ENCODE measurements at regions of chr2 and their contacts with region 1.

Region 1: DNA sequence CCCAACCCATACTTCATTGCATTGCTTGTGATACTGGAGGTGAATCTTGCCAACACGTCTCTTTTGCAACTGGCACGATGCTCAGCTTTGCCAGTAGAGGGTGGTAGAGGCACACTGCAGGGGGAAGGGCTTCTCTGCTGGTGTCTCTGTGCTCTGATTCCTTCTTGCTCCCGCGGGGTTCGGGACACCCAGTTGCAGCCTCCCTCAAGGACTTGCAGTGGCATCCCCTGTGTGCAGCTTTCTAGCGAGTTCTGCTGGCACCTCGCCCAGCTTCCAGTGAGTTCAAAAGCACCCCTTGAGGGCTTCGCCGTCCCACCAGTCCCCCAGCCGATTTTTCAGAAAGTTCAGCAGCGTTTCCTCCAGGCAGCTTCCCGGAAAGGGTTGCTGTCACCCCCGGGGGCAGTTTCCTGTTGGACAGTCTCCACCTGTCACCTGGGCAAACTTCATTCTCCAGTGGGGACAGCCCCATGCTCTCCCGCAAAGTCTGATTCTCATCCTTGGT is 35.3 kb upstream of the EN1 start:
- H3K4me3 ChIP-seq: peak overlapping the region; percentile 30
- H3K27ac ChIP-seq: no peak overlapping the region
- H3K4me1 ChIP-seq: no peaks in the 10 kb centered on the region
- CTCF ChIP-seq: peak; percentile 76

Region 2: DNA sequence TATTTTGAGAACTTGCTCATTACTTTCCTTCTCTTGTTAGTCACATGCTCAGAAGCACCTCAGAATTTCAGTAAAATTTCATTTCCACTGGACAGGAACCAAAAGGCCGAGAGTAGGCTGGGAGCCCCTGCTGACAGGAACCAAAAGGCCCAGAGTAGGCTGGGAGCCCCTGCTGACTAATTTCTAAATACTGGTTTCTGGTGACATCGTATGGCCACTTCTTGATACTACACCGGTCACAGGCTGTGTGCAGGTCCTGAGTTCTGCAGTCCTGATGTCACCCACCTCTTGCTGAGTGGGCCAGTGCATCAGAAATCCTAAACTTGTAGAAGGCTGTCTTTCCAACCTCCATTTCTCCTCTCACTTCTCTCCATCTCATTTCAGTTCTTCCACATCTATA is 17.7 kb before region 1 on chr2:
- CTCF ChIA-PET with region 1: interaction called, 38 read pairs
- POLR2A ChIA-PET with region 1: no interaction called
- H3K4me3 ChIP-seq: no peak overlapping the region
- H3K27ac ChIP-seq: no peak overlapping the region
- H3K4me1 ChIP-seq: no peaks in the 10 kb centered on the region
- CTCF ChIP-seq: 0 out of 2 replicates have a peak, but pooled peaks have one; percentile 13

Region 3: DNA sequence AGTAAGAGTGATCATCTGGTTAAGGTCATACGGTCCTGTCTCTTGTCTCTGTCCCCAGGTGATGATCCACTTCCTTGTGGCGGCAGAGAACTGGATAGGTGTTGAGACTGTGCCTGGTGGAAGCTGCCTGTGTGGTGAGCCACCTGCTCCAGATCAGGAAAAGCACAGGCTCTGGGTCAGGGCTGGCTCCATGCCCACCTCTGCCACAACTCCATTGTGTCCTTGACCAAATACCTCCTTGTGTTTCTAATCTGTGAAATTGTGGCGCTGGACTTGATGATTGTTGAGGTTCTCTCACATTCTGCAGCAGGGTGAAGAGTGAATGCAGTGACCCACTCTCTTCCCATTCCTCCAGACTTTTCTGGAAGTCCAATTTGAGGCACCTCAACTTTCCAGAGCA is 10.3 kb after region 1 on chr2:
- CTCF ChIA-PET with region 1: interaction called, 18 read pairs
- POLR2A ChIA-PET with region 1: no interaction called
- H3K4me3 ChIP-seq: no peak overlapping the region
- H3K27ac ChIP-seq: no peak overlapping the region
- H3K4me1 ChIP-seq: no peaks in the 10 kb centered on the region
- CTCF ChIP-seq: no peak

Region 4: DNA sequence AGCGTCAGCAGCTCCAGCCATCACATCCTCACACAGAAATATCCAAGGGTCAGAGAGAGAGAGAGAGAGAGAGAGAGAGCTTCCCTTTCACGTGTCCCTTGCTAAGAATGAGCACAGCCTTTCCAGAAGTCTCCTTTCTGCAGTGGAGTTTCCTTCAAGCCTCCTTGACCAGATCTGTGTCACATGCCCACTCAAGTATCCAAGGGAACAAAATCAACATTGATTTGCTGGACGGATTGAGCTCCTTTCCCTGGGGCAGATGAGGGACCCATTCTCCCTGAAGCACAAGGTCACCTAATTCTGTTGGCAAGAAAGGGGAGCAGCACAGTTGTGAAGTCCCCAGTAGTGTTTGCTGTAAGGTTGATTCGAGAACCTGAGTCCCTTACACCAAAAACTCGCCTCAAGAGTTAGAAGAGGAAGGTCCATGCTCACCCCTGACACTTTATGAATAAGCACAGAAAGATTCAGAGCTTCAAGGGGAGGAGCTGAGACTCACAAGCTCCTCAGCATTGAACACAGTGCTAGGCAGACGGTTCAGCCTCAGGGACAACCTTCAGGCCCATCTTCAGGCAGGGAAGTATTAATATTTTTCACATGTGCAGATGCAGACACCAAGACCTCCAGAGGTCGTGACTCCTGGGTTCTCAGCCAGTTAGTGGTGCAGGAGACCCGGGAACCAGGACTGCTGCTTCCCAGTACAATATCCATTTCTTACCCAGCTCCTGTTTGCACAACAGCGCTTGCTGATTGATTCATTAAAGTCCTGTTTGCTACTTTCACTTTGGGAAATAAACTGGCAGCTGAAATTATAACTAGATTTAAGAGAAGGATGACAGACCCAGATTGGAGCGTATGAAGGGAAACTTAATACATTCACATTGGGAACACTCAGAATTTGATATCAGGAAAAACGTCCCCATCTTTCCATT is 21.1 kb after region 1 on chr2:
- CTCF ChIA-PET with region 1: no interaction called
- POLR2A ChIA-PET with region 1: no interaction called
- H3K4me3 ChIP-seq: no peak overlapping the region
- H3K27ac ChIP-seq: no peak overlapping the region
- H3K4me1 ChIP-seq: no peaks in the 10 kb centered on the region
- CTCF ChIP-seq: no peak

Region 5: DNA sequence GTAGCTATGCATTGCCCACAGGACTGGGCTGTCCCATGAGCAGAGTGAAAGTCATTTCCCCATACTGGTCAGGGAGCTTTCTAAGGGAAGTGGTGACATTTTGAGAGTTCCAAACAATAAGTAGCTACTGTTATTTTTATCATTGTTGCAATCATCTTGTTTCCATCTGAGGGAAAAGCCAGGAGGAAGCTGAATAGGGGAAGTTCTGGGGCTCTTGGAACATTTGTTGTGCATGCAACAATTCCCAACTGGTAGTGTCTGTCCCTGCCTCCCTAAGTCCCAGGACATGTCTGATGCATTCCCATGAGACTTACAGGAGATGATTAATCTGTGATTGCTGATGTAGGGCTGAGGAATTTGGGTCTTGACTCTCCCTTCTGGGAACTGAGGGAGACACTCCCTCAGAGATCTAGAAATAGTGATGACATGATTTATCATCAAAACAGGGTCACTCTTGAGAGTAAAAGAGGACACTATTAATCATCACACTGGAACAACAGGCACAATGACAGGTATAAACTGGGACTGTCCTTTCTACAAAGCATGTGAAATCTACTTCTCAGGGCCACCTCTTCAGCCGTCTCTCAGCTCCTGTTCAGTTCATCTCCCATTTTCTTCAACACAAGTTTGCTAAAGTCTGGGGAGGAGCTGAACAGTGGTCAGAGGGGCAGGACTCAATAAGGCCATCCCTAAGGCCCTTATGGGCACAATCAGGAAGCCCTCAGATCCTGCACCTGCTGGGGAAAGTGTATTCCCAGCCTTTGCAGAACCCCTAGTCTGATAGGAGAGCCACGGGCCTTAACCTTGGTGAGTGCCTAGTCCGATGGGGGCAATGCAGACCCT is 31.3 kb after region 1 on chr2:
- CTCF ChIA-PET with region 1: interaction called, 13 read pairs
- POLR2A ChIA-PET with region 1: no interaction called
- H3K4me3 ChIP-seq: no peak overlapping the region
- H3K27ac ChIP-seq: no peak overlapping the region
- H3K4me1 ChIP-seq: no peaks in the 10 kb centered on the region
- CTCF ChIP-seq: no peak

Region 6: GRCh38 chr2:119011162-119011909 is 128.6 kb after region 1 on chr2:
- CTCF ChIA-PET with region 1: interaction called, 25 read pairs
- POLR2A ChIA-PET with region 1: no interaction called
- H3K4me3 ChIP-seq: no peak overlapping the region
- H3K27ac ChIP-seq: no peak overlapping the region
- H3K4me1 ChIP-seq: no peaks in the 10 kb centered on the region
- CTCF ChIP-seq: peak; percentile 57

Region 7: GRCh38 chr2:119174216-119175037 is 291.7 kb after region 1 on chr2:
- CTCF ChIA-PET with region 1: interaction called, 13 read pairs
- POLR2A ChIA-PET with region 1: no interaction called
- H3K4me3 ChIP-seq: no peak overlapping the region
- H3K27ac ChIP-seq: no peak overlapping the region
- H3K4me1 ChIP-seq: no peaks in the 10 kb centered on the region
- CTCF ChIP-seq: peak; percentile 58; the same call in 1 of the 2 replicates

Region 8: DNA sequence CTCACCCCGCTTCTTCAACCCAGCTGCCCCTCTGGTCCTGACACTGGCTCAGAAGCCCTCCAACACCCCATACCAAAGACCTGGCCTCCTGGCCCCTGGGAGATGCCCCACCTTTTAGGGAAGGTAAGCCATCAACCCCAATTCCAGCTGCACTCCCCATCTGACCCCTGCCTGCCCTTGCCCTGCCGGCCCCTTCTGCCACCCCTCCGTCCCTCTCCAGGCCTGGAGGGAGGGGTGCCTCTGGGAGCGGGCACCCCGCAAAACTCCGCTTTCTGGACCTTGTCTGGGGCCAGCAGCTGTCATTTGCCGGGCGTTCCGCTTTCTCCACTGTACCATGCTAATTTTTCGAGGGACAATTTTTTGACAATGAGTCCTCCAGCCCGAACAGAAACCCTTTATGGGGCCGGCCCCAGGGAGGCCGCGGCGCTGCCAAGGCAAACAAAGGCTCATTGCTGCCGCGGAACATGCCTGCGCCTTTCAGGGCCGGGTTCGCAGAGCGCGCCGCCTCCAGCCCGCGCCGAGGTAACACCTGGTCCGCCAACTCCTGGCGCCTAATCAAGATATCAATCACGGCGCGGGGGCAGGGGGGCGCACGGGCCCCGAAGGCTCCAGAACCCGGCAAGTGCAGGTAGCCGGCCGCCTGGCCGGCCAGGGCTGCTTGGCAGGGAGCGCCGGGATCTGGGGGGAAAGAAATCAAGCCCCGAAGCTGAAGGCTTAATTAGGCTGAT is 1559.1 kb after region 1 on chr2:
- CTCF ChIA-PET with region 1: no interaction called
- POLR2A ChIA-PET with region 1: no interaction called
- H3K4me3 ChIP-seq: no peak overlapping the region
- H3K27ac ChIP-seq: no peak overlapping the region
- H3K4me1 ChIP-seq: no peaks in the 10 kb centered on the region
- CTCF ChIP-seq: no peak

Measured in HEK293 (cell line).